Colonic mucosa (tissue), 4 donors: ENCODE measurements at regions of chr2 and their contacts with region 1.

Region 1: GRCh38 chr2:215377283-215377682 is 58.6 kb downstream of the FN1 start:
- DNase-seq: no peak
- H3K4me3 ChIP-seq: no peak overlapping the region
- H3K27ac ChIP-seq: no peak overlapping the region
- H3K4me1 ChIP-seq: no peaks in the 10 kb centered on the region
- H3K27me3 ChIP-seq: no peaks in the 10 kb centered on the region
- CTCF ChIP-seq: no peak

Region 2: GRCh38 chr2:215423234-215423633 is 46.0 kb after region 1 on chr2:
- intact Hi-C with region 1: loop called (anchors 5 kb)
- DNase-seq: no peak
- H3K4me3 ChIP-seq: no peak overlapping the region
- H3K27ac ChIP-seq: no peak overlapping the region
- H3K4me1 ChIP-seq: no peaks in the 10 kb centered on the region
- H3K27me3 ChIP-seq: no peaks in the 10 kb centered on the region
- CTCF ChIP-seq: no peak

Region 3: GRCh38 chr2:215454519-215455246 is 77.4 kb after region 1 on chr2:
- intact Hi-C with region 1: no loop called
- DNase-seq: no peak
- H3K4me3 ChIP-seq: no peak overlapping the region
- H3K27ac ChIP-seq: no peak overlapping the region
- H3K4me1 ChIP-seq: no peaks in the 10 kb centered on the region
- H3K27me3 ChIP-seq: no peaks in the 10 kb centered on the region
- CTCF ChIP-seq: peak; percentile 66

Region 4: DNA sequence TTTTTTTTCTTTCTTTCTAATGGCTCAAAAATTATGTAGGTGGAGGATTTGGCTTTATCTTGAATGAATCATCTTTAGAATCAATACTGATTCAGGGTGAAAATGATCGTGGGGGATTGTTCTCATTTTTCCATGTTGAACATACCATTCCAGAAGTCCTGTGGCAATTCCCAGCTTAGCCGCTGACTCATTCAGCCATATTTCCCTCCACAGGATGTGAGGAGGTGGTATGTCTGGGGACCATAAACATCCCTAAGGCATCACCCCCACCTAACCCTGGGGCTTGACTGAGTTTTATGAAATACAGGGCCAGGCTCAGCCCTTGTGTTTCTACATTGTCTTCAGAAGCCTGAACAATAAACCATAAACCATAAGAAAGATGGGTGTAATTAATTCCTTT is 151.3 kb after region 1 on chr2:
- intact Hi-C with region 1: no loop called
- DNase-seq: no peak
- H3K4me3 ChIP-seq: no peak overlapping the region
- H3K27ac ChIP-seq: no peak overlapping the region
- H3K4me1 ChIP-seq: no peaks in the 10 kb centered on the region
- H3K27me3 ChIP-seq: no peaks in the 10 kb centered on the region
- CTCF ChIP-seq: no peak